ENCODE measurements at regions of chr7 and their contacts with region 1.

Region 1: GRCh38 chr7:99504603-99505323 is at the start of gene ZKSCAN5:
- DNase-seq: peak; percentile 98
- H3K4me3 Mint-ChIP-seq: peak within 1 kb of the TSS; percentile 87
- H3K27ac Mint-ChIP-seq: peak within 1 kb of the TSS; percentile 98
- H3K4me1 Mint-ChIP-seq: peaks cover 25% of the 10 kb centered on the region
- H3K27me3 Mint-ChIP-seq: no peaks in the 10 kb centered on the region
- total RNA-seq, gene ZKSCAN5: 7.2 to 8.0 TPM

Region 2: GRCh38 chr7:99270683-99271082 is 234.1 kb before region 1 on chr7:
- CTCF ChIA-PET with region 1: no interaction called
- intact Hi-C with region 1: no loop called
- DNase-seq: no peak
- H3K4me3 Mint-ChIP-seq: no peak overlapping the region
- H3K27ac Mint-ChIP-seq: no peak overlapping the region
- H3K4me1 Mint-ChIP-seq: peaks cover 15% of the 10 kb centered on the region
- H3K27me3 Mint-ChIP-seq: peaks cover 3% of the 10 kb centered on the region

Region 3: GRCh38 chr7:99364961-99365817 is 139.6 kb before region 1 on chr7:
- CTCF ChIA-PET with region 1: no interaction called
- intact Hi-C with region 1: no loop called
- DNase-seq: peak; percentile 71
- H3K4me3 Mint-ChIP-seq: no peak overlapping the region
- H3K27ac Mint-ChIP-seq: no peak overlapping the region
- H3K4me1 Mint-ChIP-seq: no peaks in the 10 kb centered on the region
- H3K27me3 Mint-ChIP-seq: no peaks in the 10 kb centered on the region

Region 4: GRCh38 chr7:99380032-99380822 is 124.5 kb before region 1 on chr7:
- CTCF ChIA-PET with region 1: no interaction called
- intact Hi-C with region 1: loop called (anchors 1 kb)
- DNase-seq: peak; percentile 69
- H3K4me3 Mint-ChIP-seq: peak overlapping the region; percentile 81
- H3K27ac Mint-ChIP-seq: peak overlapping the region; percentile 97
- H3K4me1 Mint-ChIP-seq: peaks cover 61% of the 10 kb centered on the region
- H3K27me3 Mint-ChIP-seq: no peaks in the 10 kb centered on the region

Region 5: GRCh38 chr7:99438573-99439480 is 65.9 kb before region 1 on chr7 and contains the starts of genes CPSF4 and PTCD1:
- CTCF ChIA-PET with region 1: no interaction called
- intact Hi-C with region 1: loop called (anchors 2 kb)
- DNase-seq: peak; percentile 95
- H3K4me3 Mint-ChIP-seq: peak within 1 kb of the TSS; percentile 98
- H3K27ac Mint-ChIP-seq: peak within 1 kb of the TSS; percentile 94
- H3K4me1 Mint-ChIP-seq: peaks cover 43% of the 10 kb centered on the region
- H3K27me3 Mint-ChIP-seq: no peaks in the 10 kb centered on the region
- total RNA-seq, gene CPSF4: 70.6 to 73.5 TPM
- total RNA-seq, gene PTCD1: 3.5 to 5.1 TPM

Region 6: GRCh38 chr7:99472561-99473243 is 32.1 kb before region 1 on chr7 and contains the start of gene ZNF789:
- CTCF ChIA-PET with region 1: no interaction called
- intact Hi-C with region 1: loop called (anchors 1 kb)
- DNase-seq: peak; percentile 99
- H3K4me3 Mint-ChIP-seq: peak within 1 kb of the TSS; percentile 95
- H3K27ac Mint-ChIP-seq: peak within 1 kb of the TSS; percentile 83
- H3K4me1 Mint-ChIP-seq: peaks cover 32% of the 10 kb centered on the region
- H3K27me3 Mint-ChIP-seq: no peaks in the 10 kb centered on the region
- total RNA-seq, gene ZNF789: 8.0 to 9.8 TPM

Region 7: DNA sequence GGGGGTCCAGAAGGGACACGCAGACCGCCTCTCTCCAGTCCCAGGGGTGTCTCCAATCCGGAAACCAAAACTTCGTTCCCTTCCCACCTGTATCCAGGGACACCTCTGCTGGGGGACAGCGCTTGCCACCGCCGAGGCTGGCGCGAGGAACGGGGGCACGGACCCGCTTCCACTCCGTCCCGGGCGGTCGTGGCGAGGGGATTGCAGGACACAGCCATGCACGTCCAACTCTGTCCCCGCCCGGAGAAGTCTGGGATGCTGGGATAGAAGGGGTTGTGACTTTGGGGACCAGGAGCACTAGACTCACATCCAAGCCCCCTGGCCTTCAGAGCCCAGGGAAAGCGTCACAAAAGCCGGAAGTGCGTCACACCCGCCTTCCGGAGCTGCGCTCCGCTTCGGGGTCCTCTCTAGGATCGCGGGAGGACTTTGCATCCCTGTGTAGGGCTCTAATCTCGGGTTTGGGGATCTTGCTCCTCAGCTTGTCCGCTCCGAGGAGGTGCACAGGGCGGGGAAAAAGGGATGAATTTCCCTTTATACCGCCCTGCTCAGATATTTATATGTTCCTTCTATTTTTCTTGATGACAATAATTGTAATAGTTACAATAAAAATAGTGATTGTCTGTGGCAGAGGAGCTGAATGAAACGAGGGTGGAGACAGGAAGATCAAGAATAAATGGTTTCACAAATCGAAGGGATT is 47.2 kb after region 1 on chr7 and contains the start of gene FAM200A:
- CTCF ChIA-PET with region 1: interaction called, 5 read pairs
- intact Hi-C with region 1: loop called (anchors 1 kb)
- DNase-seq: peak; percentile 89
- H3K4me3 Mint-ChIP-seq: peak within 1 kb of the TSS; percentile 88
- H3K27ac Mint-ChIP-seq: peak within 1 kb of the TSS; percentile 87
- H3K4me1 Mint-ChIP-seq: peaks cover 32% of the 10 kb centered on the region
- H3K27me3 Mint-ChIP-seq: no peaks in the 10 kb centered on the region
- total RNA-seq, gene FAM200A: 3.3 to 3.8 TPM

Region 8: GRCh38 chr7:99558306-99559174 is 53.8 kb after region 1 on chr7 and contains the start of gene ZNF655:
- CTCF ChIA-PET with region 1: interaction called, 5 read pairs
- intact Hi-C with region 1: loop called (anchors 1 kb)
- DNase-seq: peak; percentile 89
- H3K4me3 Mint-ChIP-seq: peak within 1 kb of the TSS; percentile 91
- H3K27ac Mint-ChIP-seq: peak within 1 kb of the TSS; percentile 96
- H3K4me1 Mint-ChIP-seq: peaks cover 53% of the 10 kb centered on the region
- H3K27me3 Mint-ChIP-seq: no peaks in the 10 kb centered on the region
- total RNA-seq, gene ZNF655: 35.8 to 39.6 TPM

Region 9: GRCh38 chr7:99616359-99617191 is 111.8 kb after region 1 on chr7 and contains the start of gene ZSCAN25:
- CTCF ChIA-PET with region 1: no interaction called
- intact Hi-C with region 1: loop called (anchors 1 kb)
- DNase-seq: peak; percentile 91
- H3K4me3 Mint-ChIP-seq: peak within 1 kb of the TSS; percentile 95
- H3K27ac Mint-ChIP-seq: peak within 1 kb of the TSS; percentile 92
- H3K4me1 Mint-ChIP-seq: peaks cover 35% of the 10 kb centered on the region
- H3K27me3 Mint-ChIP-seq: no peaks in the 10 kb centered on the region
- total RNA-seq, gene ZSCAN25: 20.7 to 22.3 TPM

Measured in activated naive CD4-positive, alpha-beta T cell treated with anti-CD3 and anti-CD28 coated beads for 36 hours (primary cell).